Dendritic cell treated with granulocyte-macrophage colony-stimulating factor and Interleukin-4, amounts not matched to agents 40 ng/mL and 50 ng/mL, for 4 days (primary cell): ENCODE measurements at regions of chr5 and their contacts with region 1.

Region 1: GRCh38 chr5:88875341-88876234 is 7.4 kb downstream of the MEF2C start:
- H3K4me3 Mint-ChIP-seq: no peak overlapping the region
- H3K27ac Mint-ChIP-seq: no peak overlapping the region
- H3K4me1 Mint-ChIP-seq: peaks cover 8% of the 10 kb centered on the region
- H3K27me3 Mint-ChIP-seq: no peaks in the 10 kb centered on the region

Region 2: DNA sequence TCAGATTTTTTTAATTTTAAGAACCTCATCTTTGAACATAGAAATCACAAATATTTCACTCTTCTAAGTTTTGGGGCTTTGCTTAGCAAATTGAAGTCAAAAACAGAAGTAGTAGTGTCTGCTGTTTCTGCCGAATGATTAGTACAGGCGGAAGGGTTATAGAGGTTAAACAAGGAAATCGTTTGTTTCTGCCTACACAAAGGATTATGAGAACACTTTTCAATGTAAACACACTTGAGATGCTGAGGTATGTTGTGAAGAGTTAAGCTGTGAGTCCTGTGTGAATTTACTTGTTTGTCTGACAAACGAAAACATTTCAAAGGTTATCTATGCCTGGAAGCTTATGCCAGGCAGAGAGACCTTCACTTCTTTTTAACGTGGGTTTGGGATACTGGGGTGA is 1309.2 kb after region 1 on chr5:
- intact Hi-C with region 1: loop called (anchors 10 kb)
- H3K4me3 Mint-ChIP-seq: no peak overlapping the region
- H3K27ac Mint-ChIP-seq: no peak overlapping the region
- H3K4me1 Mint-ChIP-seq: no peaks in the 10 kb centered on the region
- H3K27me3 Mint-ChIP-seq: peaks cover 2% of the 10 kb centered on the region